GM12878 (cell line): ENCODE measurements at regions of chr6 and their contacts with region 1.

Region 1: DNA sequence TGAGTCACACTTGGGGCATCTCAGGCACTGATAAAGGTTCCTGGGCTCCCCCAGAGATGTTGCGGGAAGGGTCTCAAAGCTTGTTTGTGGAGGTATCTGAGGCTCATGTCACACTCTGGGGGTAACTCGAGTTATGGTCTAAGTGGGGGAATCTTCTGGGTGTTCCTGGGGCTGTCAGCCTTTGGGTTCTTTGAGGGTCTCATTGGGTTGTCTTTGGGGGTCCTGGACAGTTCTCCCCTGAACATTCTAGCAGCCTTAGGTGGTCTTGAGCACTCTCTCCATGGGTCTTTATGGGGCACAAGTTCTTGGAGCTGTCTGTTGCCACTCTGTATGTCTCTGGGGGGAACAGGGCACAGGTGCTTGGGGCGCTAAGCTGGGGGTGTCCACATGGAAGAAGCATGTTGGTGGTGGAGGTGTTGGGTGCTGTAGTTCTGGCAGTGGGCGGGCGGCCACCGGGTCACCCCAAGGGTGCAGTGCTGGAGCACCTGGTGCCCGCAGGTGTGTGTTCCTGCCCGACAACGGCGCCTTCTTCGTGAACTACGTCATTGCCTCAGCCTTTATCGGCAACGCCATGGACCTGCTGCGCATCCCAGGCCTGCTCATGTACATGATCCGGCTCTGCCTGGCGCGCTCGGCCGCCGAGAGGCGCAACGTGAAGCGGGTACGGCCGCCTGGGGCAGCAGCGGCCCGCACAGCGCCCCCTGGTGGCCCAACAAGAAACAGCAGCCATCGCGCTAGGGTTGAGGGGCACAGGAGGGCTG is 7.1 kb upstream of the CAPN11 start:
- DNase-seq: no peak
- ATAC-seq: peak; percentile 98
- H3K4me3 ChIP-seq: no peak overlapping the region
- H3K27ac ChIP-seq: no peak overlapping the region
- H3K4me1 ChIP-seq: no peaks in the 10 kb centered on the region; the same call in 1 of the 2 replicates
- H3K27me3 ChIP-seq: no peaks in the 10 kb centered on the region
- CTCF ChIP-seq: peak; percentile 92 to 99 (median 99); a peak in 5 of 6 replicates
- EP300 ChIP-seq: no peak
- POLR2A ChIP-seq: no peak; the same call in 1 of the 2 replicates
- RAD21 ChIP-seq: peak; percentile 79

Region 2: DNA sequence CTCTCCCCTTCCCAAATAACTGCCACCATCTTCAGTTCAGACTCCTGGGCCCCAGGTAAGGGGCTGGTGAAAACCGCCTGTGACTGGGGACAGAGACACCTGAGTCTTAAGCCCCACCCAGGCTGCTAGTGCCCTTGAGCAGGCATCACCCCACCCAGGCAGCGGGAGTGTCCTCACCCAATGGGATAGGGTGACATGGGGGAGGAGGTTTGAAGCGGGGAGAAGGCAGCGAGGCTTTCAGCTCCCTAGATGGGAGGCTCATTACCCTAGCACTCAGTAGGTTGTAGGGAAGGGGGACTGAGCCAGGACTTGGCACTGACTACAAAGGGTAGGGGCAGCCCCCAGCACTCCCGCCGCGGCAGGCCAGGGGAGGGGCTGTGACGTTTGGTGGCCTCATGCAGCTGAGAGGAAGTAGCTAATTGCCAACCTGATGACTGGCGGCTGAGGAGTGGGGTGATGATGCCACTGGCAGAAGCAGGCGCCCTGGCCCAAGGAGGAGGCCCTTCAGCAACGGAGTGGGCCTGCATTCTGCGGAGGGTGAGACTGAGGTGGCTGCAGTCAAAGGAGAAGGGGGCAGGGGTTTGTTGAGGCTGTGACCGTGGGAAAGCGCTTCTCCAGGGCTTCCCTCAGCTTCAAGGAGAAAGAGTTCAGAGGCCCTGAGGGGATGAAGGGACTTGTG is 151.2 kb before region 1 on chr6:
- CTCF ChIA-PET with region 1: no interaction called
- POLR2A ChIA-PET with region 1: no interaction called
- RAD21 ChIA-PET with region 1: no interaction called
- SMC1A ChIA-PET with region 1: no interaction called
- in situ Hi-C with region 1: no loop called
- intact Hi-C with region 1: no loop called
- DNase-seq: peak; percentile 84
- ATAC-seq: peak; percentile 68
- H3K4me3 ChIP-seq: peak overlapping the region; percentile 46; the same call in 1 of the 2 replicates
- H3K27ac ChIP-seq: no peak overlapping the region
- H3K4me1 ChIP-seq: peaks cover 20% of the 10 kb centered on the region
- H3K27me3 ChIP-seq: peaks cover 0 to 4% of the 10 kb centered on the region in 2 experiments; a peak in 2 of 4 replicates
- CTCF ChIP-seq: no peak
- EP300 ChIP-seq: peak; percentile 14 to 36; a peak in 2 of 4 replicates
- POLR2A ChIP-seq: peak; percentile 74
- RAD21 ChIP-seq: no peak

Region 3: DNA sequence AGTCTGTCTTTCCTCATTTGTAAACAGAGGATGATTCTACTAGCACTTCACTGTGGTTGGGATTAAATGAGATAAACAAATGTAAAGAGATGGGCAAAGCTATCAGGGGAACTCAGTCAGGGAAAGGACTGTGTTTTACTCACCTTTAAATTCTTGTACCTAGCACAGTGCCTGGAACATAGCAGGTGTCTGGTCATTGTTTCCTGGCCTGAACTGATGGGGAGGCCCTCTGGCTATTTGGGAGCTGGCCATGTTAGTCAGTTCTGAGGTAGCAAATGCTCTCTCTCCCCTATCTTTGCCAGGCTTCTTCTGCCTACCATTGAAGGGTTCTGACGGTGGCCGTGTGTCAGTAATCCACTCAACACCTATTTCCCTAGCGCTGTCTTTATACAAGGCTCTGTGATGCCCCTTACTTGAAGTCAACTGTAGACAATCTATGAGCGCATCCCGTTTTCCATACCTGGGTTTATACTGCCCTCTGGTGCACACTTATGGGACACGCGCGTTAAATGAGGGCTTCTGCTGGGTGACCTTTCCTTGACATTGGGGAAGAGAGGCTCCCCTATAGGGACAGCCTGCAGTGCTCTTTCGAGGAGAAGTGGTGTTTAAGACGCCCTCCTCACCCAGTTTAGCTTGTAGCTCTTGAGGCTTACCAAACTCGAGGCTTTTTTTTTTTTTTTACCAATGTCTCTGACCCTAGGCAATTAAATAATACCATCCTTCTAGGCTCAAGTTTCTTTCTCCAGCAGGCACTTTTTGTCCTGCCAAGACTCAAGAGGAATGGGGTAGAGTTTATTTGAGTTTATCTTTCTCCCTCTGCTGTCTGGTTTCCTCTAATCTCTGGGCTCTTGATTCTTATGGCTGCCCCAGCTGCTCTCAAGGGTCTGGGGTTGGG is 186.9 kb after region 1 on chr6:
- CTCF ChIA-PET with region 1: no interaction called
- POLR2A ChIA-PET with region 1: no interaction called
- RAD21 ChIA-PET with region 1: no interaction called
- SMC1A ChIA-PET with region 1: interaction called, 3 read pairs
- in situ Hi-C with region 1: no loop called
- intact Hi-C with region 1: loop called (anchors 5 kb)
- DNase-seq: peak; percentile 34
- ATAC-seq: peak; percentile 96
- H3K4me3 ChIP-seq: no peak overlapping the region
- H3K27ac ChIP-seq: no peak overlapping the region
- H3K4me1 ChIP-seq: no peaks in the 10 kb centered on the region
- H3K27me3 ChIP-seq: peaks cover 2 to 4% of the 10 kb centered on the region in 2 experiments; a peak in 3 of 4 replicates
- CTCF ChIP-seq: peak; percentile 71 to 92 (median 82); a peak in 5 of 6 replicates
- EP300 ChIP-seq: no peak
- POLR2A ChIP-seq: no peak
- RAD21 ChIP-seq: peak; percentile 96

Region 4: GRCh38 chr6:44415873-44416502 is 264.5 kb after region 1 on chr6:
- CTCF ChIA-PET with region 1: no interaction called
- POLR2A ChIA-PET with region 1: no interaction called
- RAD21 ChIA-PET with region 1: no interaction called
- SMC1A ChIA-PET with region 1: no interaction called
- in situ Hi-C with region 1: no loop called
- intact Hi-C with region 1: no loop called
- DNase-seq: no peak
- ATAC-seq: no peak
- H3K4me3 ChIP-seq: no peak overlapping the region
- H3K27ac ChIP-seq: no peak overlapping the region
- H3K4me1 ChIP-seq: no peaks in the 10 kb centered on the region
- H3K27me3 ChIP-seq: no peaks in the 10 kb centered on the region
- CTCF ChIP-seq: no peak
- EP300 ChIP-seq: no peak
- POLR2A ChIP-seq: no peak
- RAD21 ChIP-seq: no peak